Gastrocnemius medialis (tissue), 4 donors: ENCODE measurements at regions of chr2 and their contacts with region 1.

Region 1: DNA sequence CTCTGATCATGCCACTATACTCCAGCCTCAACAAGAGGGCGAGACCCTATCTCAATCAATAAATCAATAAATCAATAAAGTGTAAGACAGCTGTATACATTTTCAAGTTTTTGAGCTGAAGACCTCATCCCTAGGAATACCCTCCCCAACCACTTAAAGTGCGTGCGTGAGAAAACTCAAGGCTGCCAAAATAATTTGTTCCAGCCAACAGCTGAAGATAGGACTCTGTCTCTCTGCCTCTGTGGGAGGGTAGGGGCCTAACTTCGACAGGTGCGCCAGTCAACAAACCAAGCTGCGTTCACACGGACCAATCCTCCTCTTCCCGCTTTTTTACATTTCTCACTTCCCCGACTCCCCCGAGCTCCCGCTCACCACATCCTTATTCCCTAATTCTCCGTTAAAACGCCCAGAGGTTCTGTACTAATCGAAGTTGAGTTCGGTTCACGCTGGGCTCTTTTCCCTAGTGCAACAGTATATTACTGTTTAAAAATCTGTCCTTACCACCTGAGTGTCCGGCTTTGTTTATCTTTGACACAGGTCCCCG is 618 bp downstream of the POLR2D start:
- DNase-seq: no peak
- ATAC-seq: peak; percentile 11 to 12
- H3K4me3 ChIP-seq: peak overlapping the region; percentile 75 to 99 (median 90)
- H3K27ac ChIP-seq: peak overlapping the region; percentile 80 to 90 (median 83)
- H3K4me1 ChIP-seq: peaks cover 8 to 27% of the 10 kb centered on the region in 2 donors
- H3K27me3 ChIP-seq: no peaks in the 10 kb centered on the region
- CTCF ChIP-seq: no peak
- POLR2A ChIP-seq: no peak

Region 2: DNA sequence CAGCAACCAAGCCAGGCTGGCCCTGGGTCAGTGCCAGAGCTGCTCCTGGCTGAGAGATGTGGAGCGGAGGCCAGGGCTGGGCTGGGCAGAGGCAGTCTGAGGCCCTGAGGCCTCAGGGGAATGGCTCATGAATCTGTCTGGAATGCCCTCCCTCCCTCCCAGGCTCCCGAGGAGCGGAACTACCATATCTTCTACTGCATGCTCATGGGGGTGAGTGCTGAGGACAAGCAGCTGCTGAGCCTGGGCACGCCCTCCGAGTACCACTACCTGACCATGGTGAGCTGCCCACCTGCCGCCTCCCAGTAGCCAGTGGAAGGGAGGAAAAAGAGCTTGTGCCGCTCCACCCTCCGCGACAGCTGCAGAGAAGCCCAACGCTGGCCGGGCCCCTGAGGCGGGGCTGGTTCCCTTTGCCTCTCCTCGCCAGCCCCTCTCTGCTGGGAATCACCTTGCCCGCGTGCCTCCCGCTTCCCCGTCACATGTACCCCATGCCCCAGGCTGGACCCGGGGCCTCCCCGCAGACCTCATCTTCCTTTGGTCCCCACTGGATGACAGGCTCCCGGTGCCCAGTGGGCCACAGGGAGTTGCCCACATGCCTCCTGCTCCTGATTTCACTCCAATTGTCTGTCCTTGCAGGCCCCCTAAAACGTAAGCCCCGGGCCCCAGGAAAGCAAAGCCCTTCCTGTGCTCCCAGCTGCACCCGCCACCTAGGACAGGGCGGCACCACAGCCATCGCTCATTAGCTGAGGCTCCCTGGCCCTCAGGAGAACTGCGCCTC is 280.7 kb before region 1 on chr2:
- in situ Hi-C with region 1: no loop called
- intact Hi-C with region 1: loop called (anchors 10 kb)
- DNase-seq: peak; percentile 81 to 89
- ATAC-seq: peak; percentile 85 to 90
- H3K4me3 ChIP-seq: peak overlapping the region in 1 of 4 donors; percentile 44
- H3K27ac ChIP-seq: peak overlapping the region; percentile 11 to 66 (median 52)
- H3K4me1 ChIP-seq: peaks cover 23 to 26% of the 10 kb centered on the region in 2 donors
- H3K27me3 ChIP-seq: no peaks in the 10 kb centered on the region
- CTCF ChIP-seq: no peak
- POLR2A ChIP-seq: no peak

Region 3: DNA sequence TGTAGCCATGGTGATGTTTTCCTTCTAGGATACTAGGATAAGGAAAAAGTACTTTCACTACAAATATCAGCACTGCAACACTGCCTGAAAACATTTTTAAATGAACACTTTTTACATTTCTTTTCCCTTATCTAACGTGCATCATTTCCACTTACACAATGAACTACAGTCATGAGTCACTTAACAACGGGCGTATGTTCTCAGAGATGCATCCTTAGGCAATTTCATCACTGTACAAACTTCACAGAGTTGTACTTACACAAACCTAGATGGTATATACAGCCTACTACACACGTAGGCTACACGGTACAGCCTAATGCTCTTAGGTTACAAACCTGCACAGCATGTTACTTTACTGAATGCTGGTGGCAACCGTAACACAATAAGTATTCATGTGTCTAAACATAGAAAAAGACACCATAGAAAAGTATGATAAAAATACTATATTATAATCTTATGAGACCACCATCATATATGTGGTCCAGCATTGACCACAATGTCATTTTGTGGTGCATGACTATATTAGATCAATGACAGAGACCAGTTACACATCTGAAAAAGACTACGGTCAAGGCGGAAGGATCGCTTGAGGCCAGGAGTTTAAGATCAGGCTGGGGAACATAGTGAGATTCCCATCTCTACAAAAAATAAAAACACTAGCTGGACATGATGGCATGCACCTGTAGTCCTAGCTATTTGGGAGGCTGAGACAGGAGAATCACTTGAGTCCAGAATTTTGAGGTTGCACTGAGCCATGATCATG is 86.2 kb before region 1 on chr2:
- in situ Hi-C with region 1: no loop called
- intact Hi-C with region 1: no loop called
- DNase-seq: no peak
- ATAC-seq: no peak
- H3K4me3 ChIP-seq: no peak overlapping the region
- H3K27ac ChIP-seq: no peak overlapping the region
- H3K4me1 ChIP-seq: peaks cover 21 to 23% of the 10 kb centered on the region in 2 donors
- H3K27me3 ChIP-seq: no peaks in the 10 kb centered on the region
- CTCF ChIP-seq: no peak
- POLR2A ChIP-seq: no peak

Region 4: DNA sequence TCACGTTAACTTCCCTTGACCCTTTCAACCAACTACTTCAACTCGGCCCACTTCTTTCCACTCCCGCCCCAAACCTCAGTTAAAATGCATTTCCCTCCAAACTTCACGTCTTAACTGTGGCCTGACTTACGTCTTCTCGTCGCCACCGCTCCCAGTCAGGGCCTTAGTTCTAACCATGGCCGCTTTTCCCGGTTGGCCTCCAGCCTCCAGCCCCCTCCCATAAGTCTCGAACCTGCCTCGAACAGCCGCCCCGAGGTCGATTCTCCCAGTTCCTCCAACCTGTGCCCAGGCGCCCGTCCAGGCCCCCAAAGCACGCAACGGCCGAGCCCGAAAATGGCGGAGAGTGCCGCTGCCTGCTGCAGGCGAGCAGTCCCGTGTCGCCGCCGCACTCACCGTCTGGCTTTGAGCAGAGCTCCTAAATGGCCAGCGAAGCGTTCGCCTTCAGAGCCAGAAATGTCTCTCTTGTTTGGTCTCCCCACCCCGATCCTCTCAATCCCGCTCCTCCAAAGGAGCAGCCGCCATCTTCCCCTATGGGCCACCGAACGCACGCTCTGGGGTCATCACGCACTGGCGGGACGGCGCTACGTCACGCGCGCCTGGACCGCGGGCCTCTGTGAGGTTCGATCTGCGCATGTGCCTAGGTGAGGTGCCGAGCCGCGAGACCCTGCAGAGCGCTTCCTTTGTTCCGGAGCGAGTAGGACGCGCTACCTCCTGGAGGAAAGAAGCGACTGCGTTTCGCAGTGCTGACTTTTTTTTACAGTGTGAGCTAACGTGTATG is 46.5 kb before region 1 on chr2 and contains the start of gene WDR33:
- in situ Hi-C with region 1: no loop called
- intact Hi-C with region 1: loop called (anchors 1 kb)
- DNase-seq: peak; percentile 80 to 90
- ATAC-seq: peak; percentile 95 to 96
- H3K4me3 ChIP-seq: peak within 1 kb of the TSS; percentile 70 to 89 (median 88)
- H3K27ac ChIP-seq: peak within 1 kb of the TSS; percentile 86 to 97 (median 93)
- H3K4me1 ChIP-seq: peaks cover 34 to 48% of the 10 kb centered on the region in 2 donors
- H3K27me3 ChIP-seq: no peaks in the 10 kb centered on the region
- CTCF ChIP-seq: peak in 2 of 5 experiments; percentile 15 to 19
- POLR2A ChIP-seq: peak; percentile 76 to 79
- total RNA-seq, gene WDR33: 13.6 to 31.4 (median 20.6) TPM

Region 5: GRCh38 chr2:127884436-127885345 is 27.4 kb after region 1 on chr2:
- in situ Hi-C with region 1: no loop called
- intact Hi-C with region 1: loop called (anchors 2 kb)
- DNase-seq: no peak
- ATAC-seq: no peak
- H3K4me3 ChIP-seq: peak overlapping the region; percentile 57 to 86 (median 68)
- H3K27ac ChIP-seq: peak overlapping the region; percentile 89 to 96 (median 92)
- H3K4me1 ChIP-seq: peaks cover 35 to 43% of the 10 kb centered on the region in 2 donors
- H3K27me3 ChIP-seq: no peaks in the 10 kb centered on the region
- CTCF ChIP-seq: no peak
- POLR2A ChIP-seq: no peak

Region 6: DNA sequence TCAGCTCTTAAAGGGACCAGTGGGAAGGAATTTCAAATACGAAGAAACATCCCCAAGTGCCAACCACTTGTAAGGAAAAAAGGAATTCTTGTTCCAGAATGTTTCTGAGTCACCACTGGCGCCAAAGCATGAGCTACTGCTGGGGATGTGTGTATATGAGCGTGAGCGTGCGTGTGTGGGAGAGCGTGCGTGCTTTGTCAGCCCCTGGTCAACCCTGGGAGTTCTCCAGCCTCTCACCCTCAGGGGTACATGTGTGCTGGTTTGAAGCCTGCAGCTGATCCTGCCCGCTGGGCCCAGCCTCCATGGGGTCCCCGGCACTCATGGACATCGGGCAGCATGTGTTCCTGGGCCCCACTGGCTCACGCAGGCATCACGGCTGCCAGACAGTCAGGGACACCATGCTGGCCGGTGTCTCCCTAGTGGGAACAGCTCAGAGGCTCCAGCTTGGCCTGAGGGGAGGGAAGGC is 444.2 kb after region 1 on chr2:
- in situ Hi-C with region 1: no loop called
- intact Hi-C with region 1: no loop called
- DNase-seq: no peak
- ATAC-seq: no peak
- H3K4me3 ChIP-seq: no peak overlapping the region
- H3K27ac ChIP-seq: no peak overlapping the region
- H3K4me1 ChIP-seq: peaks cover 31 to 36% of the 10 kb centered on the region in 2 donors
- H3K27me3 ChIP-seq: no peaks in the 10 kb centered on the region
- CTCF ChIP-seq: no peak
- POLR2A ChIP-seq: no peak